Activated T-helper 2 cell treated with anti-CD3 and anti-CD28 coated beads, Interferon-gamma antibody, Interleukin-2, Interleukin-4, amounts not matched to agents 10 μg/mL and 5 μg/mL and 100 μg/mL, durations not matched to agents 14 hours and 24 hours and 36 hours (primary cell): ENCODE measurements at regions of chr14 and their contacts with region 1.

Region 1: GRCh38 chr14:74860906-74861733 is 14.8 kb downstream of the PROX2 start:
- DNase-seq: peak; percentile 78
- H3K4me3 Mint-ChIP-seq: no peak overlapping the region
- H3K27ac Mint-ChIP-seq: no peak overlapping the region
- H3K4me1 Mint-ChIP-seq: no peaks in the 10 kb centered on the region
- H3K27me3 Mint-ChIP-seq: no peaks in the 10 kb centered on the region

Region 2: DNA sequence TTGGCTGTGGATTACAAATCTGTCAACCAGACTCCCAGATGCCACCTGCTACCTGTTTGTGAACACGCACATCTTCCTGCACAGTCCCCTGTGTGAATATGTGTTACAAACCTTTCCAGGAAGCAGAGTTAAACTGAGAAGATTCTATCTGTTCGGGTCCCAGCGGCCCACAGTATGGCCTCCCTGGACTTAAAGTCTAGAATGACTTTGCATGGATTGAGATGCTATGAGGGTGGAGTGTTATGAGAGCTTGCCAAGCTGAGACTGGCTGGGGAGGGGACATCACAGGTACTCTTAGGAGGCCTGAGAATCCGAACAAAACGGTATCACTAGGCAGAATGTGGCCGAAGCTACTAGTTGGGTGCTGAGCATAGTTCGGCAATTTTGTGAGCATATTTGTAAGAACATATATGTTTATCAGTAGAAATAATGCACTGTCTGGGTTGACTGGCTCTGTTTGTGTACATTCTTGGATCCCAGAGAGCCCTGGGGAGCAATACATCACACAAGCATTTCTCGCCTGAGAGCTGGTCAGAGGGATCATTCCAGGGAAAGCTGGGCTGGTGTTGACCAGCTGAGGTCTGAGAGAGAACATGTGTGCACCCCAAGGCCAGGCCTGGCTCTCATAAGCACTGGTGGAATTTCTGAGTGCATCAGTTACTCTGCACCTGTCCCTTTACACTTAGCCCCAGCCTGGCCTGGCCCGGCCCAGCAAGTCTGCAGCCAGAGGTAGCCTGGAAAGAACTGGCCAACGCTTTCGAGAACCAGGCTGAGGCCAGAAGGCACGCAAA is 219.3 kb before region 1 on chr14:
- intact Hi-C with region 1: no loop called
- DNase-seq: no peak
- H3K4me3 Mint-ChIP-seq: no peak overlapping the region
- H3K27ac Mint-ChIP-seq: no peak overlapping the region
- H3K4me1 Mint-ChIP-seq: no peaks in the 10 kb centered on the region
- H3K27me3 Mint-ChIP-seq: peaks cover 5% of the 10 kb centered on the region

Region 3: GRCh38 chr14:74804219-74804826 is 56.8 kb before region 1 on chr14:
- intact Hi-C with region 1: no loop called
- DNase-seq: no peak
- H3K4me3 Mint-ChIP-seq: no peak overlapping the region
- H3K27ac Mint-ChIP-seq: no peak overlapping the region
- H3K4me1 Mint-ChIP-seq: peaks cover 1% of the 10 kb centered on the region
- H3K27me3 Mint-ChIP-seq: no peaks in the 10 kb centered on the region

Region 4: DNA sequence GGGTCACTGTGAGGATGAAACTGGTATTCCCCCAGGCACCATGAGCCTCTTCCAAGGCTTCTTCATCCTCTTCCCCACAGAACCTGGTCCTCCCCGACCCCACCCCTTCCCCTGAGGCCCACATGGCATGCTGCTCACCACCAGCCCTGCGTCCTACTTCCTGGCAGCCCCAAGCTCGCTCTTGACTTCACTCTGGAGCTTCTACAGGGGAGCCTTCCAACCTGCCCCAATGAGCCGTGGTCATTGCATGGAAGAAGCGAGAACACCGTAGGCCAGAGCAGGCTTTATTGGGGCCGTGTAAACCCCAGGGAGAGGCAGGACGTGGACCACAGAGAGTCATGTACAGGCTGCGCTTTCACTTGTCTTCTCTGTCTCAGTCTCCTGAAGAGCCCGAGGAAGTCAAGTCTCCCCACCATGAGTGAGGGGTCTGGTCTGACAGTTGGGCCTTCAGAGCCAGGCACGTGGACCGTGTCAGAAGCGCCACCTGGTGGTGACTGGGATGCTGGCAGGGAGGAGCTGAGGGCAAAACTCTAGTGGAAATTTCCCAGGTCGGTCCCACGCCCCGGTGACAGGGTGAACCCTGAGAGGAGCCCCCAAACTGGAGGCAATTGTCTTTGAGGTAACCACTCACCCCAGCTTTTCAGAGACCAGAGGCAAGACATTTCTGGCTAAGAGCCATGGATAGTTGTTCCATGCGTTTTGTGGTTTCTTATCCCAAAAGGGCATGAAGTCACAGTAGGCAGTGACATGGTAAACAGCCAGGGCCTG is 44.4 kb after region 1 on chr14:
- intact Hi-C with region 1: loop called (anchors 1 kb)
- DNase-seq: peak; percentile 56
- H3K4me3 Mint-ChIP-seq: no peak overlapping the region
- H3K27ac Mint-ChIP-seq: peak overlapping the region; percentile 42
- H3K4me1 Mint-ChIP-seq: no peaks in the 10 kb centered on the region
- H3K27me3 Mint-ChIP-seq: no peaks in the 10 kb centered on the region

Region 5: GRCh38 chr14:75001899-75002298 is 140.8 kb after region 1 on chr14:
- intact Hi-C with region 1: no loop called
- DNase-seq: no peak
- H3K4me3 Mint-ChIP-seq: peak overlapping the region; percentile 94
- H3K27ac Mint-ChIP-seq: peak overlapping the region; percentile 88
- H3K4me1 Mint-ChIP-seq: peaks cover 23% of the 10 kb centered on the region
- H3K27me3 Mint-ChIP-seq: peaks cover 2% of the 10 kb centered on the region

Region 6: DNA sequence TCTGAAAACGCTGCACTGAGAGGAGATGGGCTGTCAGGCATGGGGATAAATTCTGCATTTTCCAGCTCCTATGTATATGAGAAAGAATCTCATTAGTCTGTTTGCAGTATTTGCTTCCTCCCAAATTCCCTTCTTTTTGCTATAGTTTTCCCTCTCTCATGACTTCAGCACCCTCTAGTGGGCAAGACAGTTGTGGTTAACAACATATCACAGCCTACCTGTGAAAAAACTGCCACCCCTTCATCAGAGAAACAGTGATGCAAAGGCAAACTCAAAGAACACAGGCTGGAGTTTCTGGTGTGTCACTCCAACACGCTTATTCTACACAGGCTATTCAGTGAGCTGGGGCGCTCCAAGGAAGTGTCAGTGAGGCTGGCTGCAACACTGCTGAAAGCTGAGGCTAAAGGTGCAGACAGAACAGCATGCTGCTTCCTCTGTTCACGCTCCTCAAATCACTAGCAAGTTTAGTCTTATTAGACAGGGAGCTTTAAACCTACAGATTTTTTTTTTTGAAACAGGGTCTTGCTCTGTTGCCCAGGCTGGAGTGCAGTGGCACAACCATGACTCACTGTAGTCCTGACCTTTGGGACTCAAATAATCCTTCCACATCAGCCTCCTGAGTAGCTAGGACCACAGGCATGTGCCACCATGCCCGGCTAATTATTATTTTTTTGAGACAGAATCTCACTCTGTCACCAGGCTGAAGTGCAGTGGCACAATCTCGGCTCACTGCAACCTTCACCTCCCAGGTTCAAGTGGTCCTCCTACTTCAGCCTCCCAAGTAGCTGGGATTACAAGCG is 227.7 kb after region 1 on chr14:
- intact Hi-C with region 1: loop called (anchors 1 kb)
- DNase-seq: no peak
- H3K4me3 Mint-ChIP-seq: no peak overlapping the region
- H3K27ac Mint-ChIP-seq: no peak overlapping the region
- H3K4me1 Mint-ChIP-seq: no peaks in the 10 kb centered on the region
- H3K27me3 Mint-ChIP-seq: no peaks in the 10 kb centered on the region